CD8-positive, alpha-beta T cell (primary cell): ENCODE measurements at regions of chr22 and their contacts with region 1.

Region 1: GRCh38 chr22:39979048-39979447 is 15.7 kb upstream of the FAM83F start:
- DNase-seq: peak in 2 of 9 experiments; percentile 52 to 57
- ATAC-seq: peak; percentile 79
- H3K4me3 ChIP-seq: no peak overlapping the region
- H3K4me3 Mint-ChIP-seq: peak overlapping the region; percentile 1
- H3K27ac ChIP-seq: no peak overlapping the region
- H3K27ac Mint-ChIP-seq: peak overlapping the region; percentile 91
- H3K4me1 ChIP-seq: peaks cover 16% of the 10 kb centered on the region
- H3K4me1 Mint-ChIP-seq: peaks cover 32% of the 10 kb centered on the region
- H3K27me3 ChIP-seq: no peaks in the 10 kb centered on the region
- H3K27me3 Mint-ChIP-seq: no peaks in the 10 kb centered on the region
- CTCF ChIP-seq: no peak

Region 2: DNA sequence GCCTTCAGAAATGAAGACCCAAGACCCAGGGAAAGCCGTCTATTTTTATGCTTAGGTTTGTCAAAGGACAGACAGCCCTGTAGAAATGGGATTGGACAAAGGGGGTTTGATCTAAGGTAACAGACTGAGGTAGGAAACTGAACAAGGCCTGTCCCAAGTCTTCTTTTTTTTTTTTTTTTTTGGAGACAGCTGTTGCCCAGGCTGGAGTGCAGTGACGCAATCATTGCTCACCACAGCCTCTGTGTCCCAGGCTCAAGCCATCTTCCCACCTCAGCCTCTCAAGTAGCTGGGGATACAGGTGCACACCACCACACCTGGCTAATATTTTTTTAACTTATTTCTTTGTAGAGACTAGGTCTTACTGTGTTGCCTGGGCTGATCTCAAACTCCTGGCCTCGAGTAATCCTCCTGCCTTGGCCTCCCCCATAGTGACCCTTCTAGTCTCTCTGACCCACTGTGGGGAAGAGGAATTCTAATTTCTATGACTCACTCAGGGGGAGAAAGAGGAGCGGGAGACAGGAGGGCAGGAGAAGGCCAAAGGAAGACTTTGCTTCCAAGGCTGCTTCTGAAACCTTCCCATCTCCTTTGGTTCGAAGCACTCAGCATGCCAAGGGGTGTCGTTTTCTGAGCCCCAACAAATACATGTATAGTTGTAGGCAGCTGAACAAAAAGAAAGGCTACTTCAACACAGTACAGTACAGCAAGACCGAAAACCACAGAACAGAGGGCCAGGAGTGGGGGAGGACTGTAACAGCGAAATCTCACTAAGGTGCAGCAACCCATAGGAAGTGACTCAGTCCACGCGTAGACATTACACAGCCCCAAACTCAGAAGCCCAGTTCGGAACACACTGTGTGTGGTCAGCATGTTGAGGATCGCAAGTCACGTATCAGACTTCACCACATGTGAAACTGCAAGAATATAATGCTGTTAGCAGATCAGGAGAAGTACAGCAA is 18.0 kb before region 1 on chr22:
- CTCF ChIA-PET with region 1: interaction called, 4 read pairs
- POLR2A ChIA-PET with region 1: interaction called, 6 read pairs
- intact Hi-C with region 1: loop called in 1 of 2 experiments (anchors 2 kb)
- DNase-seq: peak; percentile 15 to 90 (median 69)
- ATAC-seq: peak; percentile 82
- H3K4me3 ChIP-seq: no peak overlapping the region
- H3K4me3 Mint-ChIP-seq: peak overlapping the region; percentile 19
- H3K27ac ChIP-seq: peak overlapping the region; percentile 15 to 80
- H3K27ac Mint-ChIP-seq: peak overlapping the region; percentile 92
- H3K4me1 ChIP-seq: peaks cover 60% of the 10 kb centered on the region
- H3K4me1 Mint-ChIP-seq: peaks cover 69% of the 10 kb centered on the region
- H3K27me3 ChIP-seq: no peaks in the 10 kb centered on the region
- H3K27me3 Mint-ChIP-seq: no peaks in the 10 kb centered on the region
- CTCF ChIP-seq: no peak

Region 3: DNA sequence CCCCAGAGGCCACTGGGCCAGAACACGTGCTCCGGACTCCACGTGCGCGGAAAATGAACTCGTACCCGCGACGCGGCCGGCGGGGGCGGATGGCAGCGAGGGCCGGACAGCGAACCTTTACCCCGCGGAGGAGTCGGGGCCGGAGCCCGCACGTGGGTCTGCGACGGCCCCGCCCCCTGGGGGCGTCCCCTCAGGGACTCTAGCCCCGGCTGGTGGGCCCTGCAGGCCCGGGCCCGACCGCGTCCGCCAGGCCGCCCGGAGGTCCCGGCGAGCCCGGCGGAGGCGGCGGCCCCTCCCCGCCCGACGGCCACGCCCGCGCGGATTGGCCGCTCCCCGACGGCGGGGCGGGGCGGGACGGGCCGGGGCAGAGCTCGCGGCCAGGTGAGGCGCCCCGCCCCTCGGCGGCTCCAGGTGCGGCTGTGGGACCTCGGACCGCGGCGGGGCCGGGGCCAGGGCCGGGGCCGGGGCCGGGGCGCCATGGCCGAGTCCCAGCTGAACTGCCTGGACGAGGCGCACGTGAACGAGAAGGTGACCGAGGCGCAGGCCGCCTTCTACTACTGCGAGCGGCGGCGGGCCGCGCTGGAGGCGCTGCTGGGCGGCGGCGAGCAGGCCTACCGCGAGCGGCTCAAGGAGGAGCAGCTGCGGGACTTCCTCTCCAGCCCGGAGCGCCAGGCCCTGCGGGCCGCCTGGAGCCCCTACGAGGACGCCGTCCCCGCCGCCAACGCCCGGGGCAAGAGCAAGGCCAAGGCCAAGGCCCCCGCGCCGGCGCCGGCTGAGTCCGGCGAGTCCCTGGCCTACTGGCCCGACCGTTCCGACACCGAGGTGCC is 15.7 kb after region 1 on chr22 and contains the start of gene FAM83F:
- CTCF ChIA-PET with region 1: interaction called, 3 read pairs
- POLR2A ChIA-PET with region 1: interaction called, 11 read pairs
- intact Hi-C with region 1: loop called in 1 of 2 experiments (anchors 2 kb)
- DNase-seq: peak in 4 of 9 experiments; percentile 25 to 56 (median 45)
- ATAC-seq: peak; percentile 26
- H3K4me3 ChIP-seq: peak within 1 kb of the TSS in 1 of 2 experiments; percentile 47
- H3K4me3 Mint-ChIP-seq: peak within 1 kb of the TSS; percentile 80
- H3K27ac ChIP-seq: no peak within 1 kb of the TSS
- H3K27ac Mint-ChIP-seq: peak within 1 kb of the TSS; percentile 92
- H3K4me1 ChIP-seq: peaks cover 14% of the 10 kb centered on the region
- H3K4me1 Mint-ChIP-seq: peaks cover 14% of the 10 kb centered on the region
- H3K27me3 ChIP-seq: peaks cover 0 to 15% of the 10 kb centered on the region in 2 experiments
- H3K27me3 Mint-ChIP-seq: peaks cover 19% of the 10 kb centered on the region
- CTCF ChIP-seq: no peak
- total RNA-seq, gene FAM83F: 17.6 to 23.5 TPM

Region 4: DNA sequence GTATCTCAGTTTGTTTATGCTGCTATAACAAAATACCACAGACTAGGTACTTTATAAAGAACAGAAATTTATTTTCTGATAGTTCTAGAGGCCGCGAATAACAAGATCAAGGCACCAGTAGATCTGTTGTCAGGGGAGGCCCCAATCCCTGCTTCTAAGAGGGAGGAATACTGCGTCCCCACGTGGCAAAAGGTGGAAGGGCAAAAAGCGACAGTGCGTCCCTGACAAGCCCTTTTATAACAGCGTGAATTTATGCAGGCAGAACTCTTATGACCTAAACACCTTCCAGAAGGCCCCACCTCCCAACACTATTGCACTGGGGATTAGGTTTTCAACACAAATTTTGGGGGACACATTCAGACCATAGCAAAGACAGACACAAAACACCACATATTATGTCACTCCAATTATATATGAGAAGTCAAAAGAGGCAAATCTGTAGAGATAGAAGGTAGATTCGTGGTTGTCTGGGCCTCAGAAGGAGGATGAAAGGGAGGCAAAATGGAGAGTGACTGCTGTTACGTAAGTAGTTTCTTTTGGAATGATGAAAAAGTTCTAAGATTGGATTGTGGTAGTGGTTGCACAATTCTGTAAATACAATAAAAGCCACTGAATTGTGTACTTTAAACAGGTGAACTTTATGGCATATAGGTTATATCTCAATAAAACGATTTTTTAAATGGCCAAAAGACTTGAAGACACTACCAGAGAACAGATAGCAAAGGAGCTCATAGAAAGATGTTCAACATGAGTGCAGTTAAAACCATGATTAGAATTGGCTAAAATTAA is 168.5 kb after region 1 on chr22:
- CTCF ChIA-PET with region 1: no interaction called
- POLR2A ChIA-PET with region 1: no interaction called
- intact Hi-C with region 1: no loop called
- DNase-seq: no peak
- ATAC-seq: no peak
- H3K4me3 ChIP-seq: no peak overlapping the region
- H3K4me3 Mint-ChIP-seq: no peak overlapping the region
- H3K27ac ChIP-seq: no peak overlapping the region
- H3K27ac Mint-ChIP-seq: peak overlapping the region; percentile 4
- H3K4me1 ChIP-seq: no peaks in the 10 kb centered on the region
- H3K4me1 Mint-ChIP-seq: peaks cover 11% of the 10 kb centered on the region
- H3K27me3 ChIP-seq: no peaks in the 10 kb centered on the region
- H3K27me3 Mint-ChIP-seq: no peaks in the 10 kb centered on the region
- CTCF ChIP-seq: no peak